ENCODE measurements at regions of chr9 and their contacts with region 1.

Region 1: DNA sequence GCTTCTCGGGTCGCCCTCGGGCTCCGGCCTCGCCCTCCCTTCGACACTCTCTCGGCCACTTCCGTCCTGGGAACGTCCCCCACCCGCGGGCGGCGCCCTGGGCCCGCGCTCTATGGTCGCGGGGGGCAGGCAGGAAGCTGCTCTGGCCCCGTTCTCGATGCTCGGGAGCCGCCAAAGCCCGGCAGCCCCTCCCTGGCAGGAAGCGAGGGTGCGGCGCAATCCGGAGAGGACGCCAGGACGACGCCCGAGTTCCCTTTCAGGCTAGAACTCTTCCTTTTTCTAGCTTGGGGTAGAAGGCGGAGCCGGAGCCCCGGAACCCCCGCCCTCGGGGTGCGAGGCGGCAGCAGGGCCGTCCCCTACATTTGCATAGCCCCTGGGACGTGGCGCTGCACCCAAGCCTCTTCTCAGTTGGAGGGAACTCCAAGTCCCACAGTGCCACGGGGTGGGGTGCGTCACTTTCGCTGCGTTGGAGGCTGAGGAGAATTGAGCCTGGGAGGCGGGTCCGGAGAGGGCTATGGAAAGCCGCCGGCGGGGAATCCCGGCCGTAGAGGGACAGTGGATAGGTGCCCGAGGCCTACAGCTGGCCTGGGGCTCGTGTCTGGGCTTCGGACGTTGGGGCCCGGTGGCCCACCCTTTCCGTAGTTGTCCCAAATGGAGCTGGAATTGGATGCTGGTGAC is at the starts of genes CREB3 and TLN1:
- DNase-seq: peak; percentile 95
- ATAC-seq: peak; percentile 72
- H3K4me3 Mint-ChIP-seq: peak within 1 kb of the TSS; percentile 90
- H3K27ac Mint-ChIP-seq: peak within 1 kb of the TSS; percentile 95
- H3K4me1 Mint-ChIP-seq: peaks cover 14% of the 10 kb centered on the region
- H3K27me3 Mint-ChIP-seq: no peaks in the 10 kb centered on the region
- CTCF ChIP-seq: no peak
- total RNA-seq, gene CREB3: 21.4 to 24.2 TPM (median 23.1 TPM) in 3 replicates
- total RNA-seq, gene TLN1: 97.1 to 109 TPM (median 106 TPM) in 3 replicates

Region 2: GRCh38 chr9:35603987-35604577 is 128.2 kb before region 1 on chr9:
- CTCF ChIA-PET with region 1: interaction called, 15 read pairs
- POLR2A ChIA-PET with region 1: interaction called, 4 read pairs
- DNase-seq: peak; percentile 99
- ATAC-seq: peak; percentile 89
- H3K4me3 Mint-ChIP-seq: peak overlapping the region; percentile 99
- H3K27ac Mint-ChIP-seq: peak overlapping the region; percentile 100
- H3K4me1 Mint-ChIP-seq: peaks cover 25% of the 10 kb centered on the region
- H3K27me3 Mint-ChIP-seq: peaks cover 5% of the 10 kb centered on the region
- CTCF ChIP-seq: peak; percentile 83

Region 3: DNA sequence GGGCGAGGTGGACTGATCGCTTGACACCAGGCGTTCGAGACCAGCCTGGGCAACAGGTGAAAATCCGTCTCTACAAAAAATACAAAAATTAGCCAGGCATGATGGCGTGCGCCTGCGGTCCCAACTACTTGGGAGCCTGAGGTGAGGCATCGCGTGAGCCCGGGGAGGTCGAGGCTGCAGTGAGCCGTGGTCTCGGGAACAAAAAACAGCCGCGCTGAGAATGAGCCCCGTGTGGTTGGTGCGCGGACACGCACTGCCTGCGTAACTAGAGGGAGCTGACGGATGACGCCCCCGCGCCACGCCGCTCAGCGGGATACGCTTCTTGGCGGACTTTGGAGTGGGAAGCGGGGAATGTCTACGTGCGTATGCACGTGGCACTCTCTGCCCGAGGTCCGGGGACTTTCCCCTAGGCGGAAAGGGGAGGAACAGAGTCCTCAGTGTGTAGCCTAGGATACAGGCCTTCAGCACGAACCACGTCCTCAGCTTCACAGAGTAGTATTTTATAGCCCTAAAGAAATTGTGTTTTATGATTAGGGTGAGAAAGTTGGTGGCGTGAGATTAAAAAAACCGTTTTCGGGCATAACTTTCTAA is 74.6 kb before region 1 on chr9 and contains the start of gene RMRP:
- CTCF ChIA-PET with region 1: interaction called, 24 read pairs
- POLR2A ChIA-PET with region 1: interaction called, 11 read pairs
- DNase-seq: peak; percentile 96
- ATAC-seq: peak; percentile 90
- H3K4me3 Mint-ChIP-seq: peak within 1 kb of the TSS; percentile 85
- H3K27ac Mint-ChIP-seq: peak within 1 kb of the TSS; percentile 100
- H3K4me1 Mint-ChIP-seq: peaks cover 20% of the 10 kb centered on the region
- H3K27me3 Mint-ChIP-seq: peaks cover 23% of the 10 kb centered on the region
- CTCF ChIP-seq: no peak
- total RNA-seq, gene RMRP: 23,577 to 25,958 TPM (median 25,042 TPM) in 3 replicates

Region 4: GRCh38 chr9:35675732-35676392 is 56.4 kb before region 1 on chr9:
- CTCF ChIA-PET with region 1: interaction called, 11 read pairs
- POLR2A ChIA-PET with region 1: interaction called, 4 read pairs
- DNase-seq: peak; percentile 95
- ATAC-seq: peak; percentile 92
- H3K4me3 Mint-ChIP-seq: peak overlapping the region; percentile 69
- H3K27ac Mint-ChIP-seq: no peak overlapping the region
- H3K4me1 Mint-ChIP-seq: peaks cover 15% of the 10 kb centered on the region
- H3K27me3 Mint-ChIP-seq: peaks cover 30% of the 10 kb centered on the region
- CTCF ChIP-seq: no peak

Region 5: DNA sequence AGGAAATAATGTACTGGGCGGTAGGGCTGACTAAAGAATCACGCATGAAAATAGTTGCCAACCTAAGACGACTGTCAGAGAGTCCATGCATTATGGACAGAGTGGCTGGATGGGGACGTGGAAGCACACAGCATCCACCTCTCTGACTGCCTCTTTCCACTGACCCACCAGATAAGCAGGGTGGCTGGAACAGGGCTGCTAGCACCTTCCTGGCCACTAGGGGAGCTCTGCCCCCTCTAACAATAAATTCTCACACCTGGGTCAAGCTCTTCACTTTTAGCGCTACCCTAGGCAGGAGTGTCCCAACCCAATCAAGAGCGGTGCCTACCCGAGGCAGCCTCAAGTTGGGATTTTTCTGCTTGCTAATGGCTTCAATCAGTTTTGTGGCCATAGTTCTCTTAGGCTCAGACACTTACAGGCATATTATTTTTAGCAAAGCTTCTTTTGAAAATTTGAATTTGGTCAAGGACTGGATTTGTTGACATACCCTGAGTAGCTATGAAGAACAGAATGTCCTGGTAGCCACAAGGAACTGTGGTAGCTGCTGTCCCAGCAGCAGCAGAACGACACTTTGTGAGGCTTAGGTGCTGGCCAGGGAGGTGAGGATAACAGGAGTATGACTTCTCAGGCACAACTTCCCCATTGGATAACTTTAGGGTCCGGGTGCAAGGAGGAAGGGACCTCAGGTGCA is 35.6 kb before region 1 on chr9:
- CTCF ChIA-PET with region 1: interaction called, 103 read pairs
- POLR2A ChIA-PET with region 1: interaction called, 4 read pairs
- DNase-seq: peak; percentile 81
- ATAC-seq: peak; percentile 97
- H3K4me3 Mint-ChIP-seq: no peak overlapping the region
- H3K27ac Mint-ChIP-seq: 0 out of 2 replicates have a peak overlapping the region, but pooled peaks have one; percentile 72
- H3K4me1 Mint-ChIP-seq: peaks cover 4% of the 10 kb centered on the region
- H3K27me3 Mint-ChIP-seq: no peaks in the 10 kb centered on the region
- CTCF ChIP-seq: peak; percentile 85

Region 6: GRCh38 chr9:35748858-35749514 is 16.7 kb after region 1 on chr9 and contains the starts of genes GBA2 and RGP1:
- CTCF ChIA-PET with region 1: interaction called, 27 read pairs
- POLR2A ChIA-PET with region 1: interaction called, 13 read pairs
- DNase-seq: peak; percentile 83
- ATAC-seq: peak; percentile 84
- H3K4me3 Mint-ChIP-seq: peak within 1 kb of the TSS; percentile 92
- H3K27ac Mint-ChIP-seq: peak within 1 kb of the TSS; percentile 74
- H3K4me1 Mint-ChIP-seq: peaks cover 27% of the 10 kb centered on the region
- H3K27me3 Mint-ChIP-seq: no peaks in the 10 kb centered on the region
- CTCF ChIP-seq: no peak
- total RNA-seq, gene GBA2: 85.5 to 104 TPM (median 89.7 TPM) in 3 replicates
- total RNA-seq, gene RGP1: 29.7 to 30.0 TPM (median 30.0 TPM) in 3 replicates

Region 7: GRCh38 chr9:35783418-35783817 is 51.2 kb after region 1 on chr9:
- CTCF ChIA-PET with region 1: no interaction called
- POLR2A ChIA-PET with region 1: no interaction called
- DNase-seq: no peak
- ATAC-seq: no peak
- H3K4me3 Mint-ChIP-seq: no peak overlapping the region
- H3K27ac Mint-ChIP-seq: no peak overlapping the region
- H3K4me1 Mint-ChIP-seq: no peaks in the 10 kb centered on the region
- H3K27me3 Mint-ChIP-seq: no peaks in the 10 kb centered on the region
- CTCF ChIP-seq: no peak

Region 8: DNA sequence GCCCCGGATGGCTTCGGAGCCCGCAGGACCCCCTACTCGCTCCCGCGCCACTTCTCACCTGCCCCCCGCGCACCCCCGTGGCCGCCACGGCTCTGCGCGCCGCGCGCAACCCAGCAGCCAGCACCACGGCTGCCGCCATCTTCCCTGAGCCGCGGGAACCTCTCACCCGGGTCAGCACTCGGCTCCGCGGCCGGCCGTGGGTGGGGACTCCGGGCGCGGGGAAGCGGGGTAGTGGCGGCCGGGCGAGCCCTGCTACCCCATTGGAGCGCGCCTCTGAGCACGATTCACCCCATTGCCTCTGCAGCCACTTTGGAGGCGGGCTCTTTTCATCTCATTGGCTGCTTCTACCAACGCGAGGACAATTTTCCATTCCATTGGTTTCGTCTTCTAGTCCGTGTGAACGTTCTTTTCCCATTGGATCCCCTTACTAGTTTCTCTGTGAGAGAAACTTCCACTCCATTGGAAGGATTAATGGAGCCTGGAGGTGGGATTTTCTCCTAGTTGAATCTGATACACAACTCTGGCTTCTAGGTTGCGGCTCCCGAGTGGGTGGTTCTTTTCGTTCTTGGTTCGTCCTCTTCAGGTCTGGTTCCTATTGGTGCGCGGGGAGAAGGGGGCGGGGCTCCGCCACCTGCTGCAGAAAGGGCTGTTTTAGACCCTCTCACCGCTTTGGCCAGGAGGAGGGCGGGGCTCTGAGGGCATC is 82.7 kb after region 1 on chr9 and contains the start of gene HINT2:
- CTCF ChIA-PET with region 1: interaction called, 11 read pairs
- POLR2A ChIA-PET with region 1: interaction called, 3 read pairs
- DNase-seq: peak; percentile 99
- ATAC-seq: peak; percentile 80
- H3K4me3 Mint-ChIP-seq: peak within 1 kb of the TSS; percentile 91
- H3K27ac Mint-ChIP-seq: peak within 1 kb of the TSS; percentile 100
- H3K4me1 Mint-ChIP-seq: peaks cover 27% of the 10 kb centered on the region
- H3K27me3 Mint-ChIP-seq: peaks cover 11% of the 10 kb centered on the region
- CTCF ChIP-seq: no peak
- total RNA-seq, gene HINT2: 33.6 to 42.7 TPM (median 42.1 TPM) in 3 replicates

Measured in WTC11 (cell line).